ENCODE measurements at regions of chr5 and their contacts with region 1.

Region 1: GRCh38 chr5:151150471-151151262 is 6.9 kb downstream of the ANXA6 start:
- DNase-seq: peak; percentile 32
- ATAC-seq: peak; percentile 62
- H3K4me3 Mint-ChIP-seq: peak overlapping the region; percentile 33
- H3K27ac Mint-ChIP-seq: peak overlapping the region; percentile 87
- H3K4me1 Mint-ChIP-seq: peaks cover 96% of the 10 kb centered on the region
- H3K27me3 Mint-ChIP-seq: no peaks in the 10 kb centered on the region
- CTCF ChIP-seq: no peak

Region 2: DNA sequence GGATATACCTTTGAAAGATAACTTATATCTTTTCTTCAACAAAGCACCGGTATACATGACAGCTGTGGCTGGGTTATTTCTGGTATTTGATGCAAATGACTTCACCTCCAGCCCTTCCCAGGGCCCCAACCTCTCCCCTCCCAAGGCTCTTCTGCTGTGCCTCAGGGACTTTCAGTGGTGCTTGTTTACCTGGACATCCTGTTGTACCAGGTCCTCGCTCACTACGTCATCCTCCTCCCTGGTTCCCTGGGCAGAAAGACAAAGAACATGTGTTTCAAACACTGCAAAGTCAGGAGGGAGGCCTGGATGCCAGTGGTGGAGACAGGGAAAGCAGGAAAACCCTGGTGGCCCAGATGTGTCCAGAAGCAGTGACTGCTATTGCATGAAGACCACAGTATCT is 16.4 kb before region 1 on chr5:
- CTCF ChIA-PET with region 1: interaction called, 4 read pairs
- POLR2A ChIA-PET with region 1: interaction called, 20 read pairs
- intact Hi-C with region 1: loop called (anchors 1 kb)
- DNase-seq: no peak
- ATAC-seq: peak; percentile 23
- H3K4me3 Mint-ChIP-seq: peak overlapping the region; percentile 45
- H3K27ac Mint-ChIP-seq: peak overlapping the region; percentile 83
- H3K4me1 Mint-ChIP-seq: peaks cover 83% of the 10 kb centered on the region
- H3K27me3 Mint-ChIP-seq: no peaks in the 10 kb centered on the region
- CTCF ChIP-seq: no peak

Region 3: GRCh38 chr5:152730176-152730575 is 1579.5 kb after region 1 on chr5:
- CTCF ChIA-PET with region 1: no interaction called
- POLR2A ChIA-PET with region 1: no interaction called
- intact Hi-C with region 1: no loop called
- DNase-seq: no peak
- ATAC-seq: no peak
- H3K4me3 Mint-ChIP-seq: no peak overlapping the region
- H3K27ac Mint-ChIP-seq: no peak overlapping the region
- H3K4me1 Mint-ChIP-seq: no peaks in the 10 kb centered on the region
- H3K27me3 Mint-ChIP-seq: no peaks in the 10 kb centered on the region
- CTCF ChIP-seq: no peak